ENCODE measurements at regions of chr6 and their contacts with region 1.

Region 1: DNA sequence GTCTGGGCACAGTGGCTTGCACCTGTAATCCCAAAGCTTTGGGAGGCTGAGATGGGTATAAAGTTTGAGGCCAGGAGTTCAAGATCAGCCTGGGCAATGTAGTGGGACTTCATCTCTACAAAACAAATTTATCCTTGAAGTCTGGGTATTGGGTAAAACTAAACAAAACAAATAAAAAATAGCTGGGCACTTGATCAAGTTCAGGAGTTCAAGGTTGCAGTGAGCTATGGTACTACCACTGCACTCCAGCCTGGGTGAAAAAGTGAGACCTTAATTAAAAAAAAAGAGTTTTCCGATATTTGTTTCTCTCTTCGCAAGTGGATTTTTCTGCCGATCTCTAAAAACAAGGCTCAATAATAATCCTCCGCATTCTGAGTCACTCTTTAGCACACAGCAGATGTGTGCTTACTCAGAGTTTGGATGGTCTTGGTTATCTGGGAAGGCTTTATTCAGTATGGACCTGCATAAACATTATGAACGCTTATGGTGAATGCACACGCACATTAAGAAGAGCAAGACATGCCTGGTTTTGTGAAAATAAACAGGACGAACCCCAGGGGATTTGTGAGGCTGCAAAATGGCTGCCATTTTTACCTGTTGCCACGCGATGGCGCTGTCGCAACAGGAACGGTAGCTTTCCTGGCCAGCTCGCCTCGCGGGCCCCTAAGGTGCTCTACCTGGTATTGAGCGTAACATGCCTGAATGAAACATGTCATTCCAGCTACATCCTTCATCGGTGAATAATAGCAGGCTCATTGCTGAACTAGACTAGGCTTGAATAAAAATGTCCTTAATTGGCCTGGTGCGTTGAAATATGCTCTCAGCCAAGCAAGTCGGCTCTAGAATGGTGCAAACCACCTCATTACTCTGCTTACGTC is 6.0 kb downstream of the OPN5 start:
- DNase-seq: peak; percentile 21 to 87
- H3K4me3 ChIP-seq: no peak overlapping the region
- CTCF ChIP-seq: peak in 1 of 3 donors; percentile 38
- POLR2A ChIP-seq: no peak

Region 2: DNA sequence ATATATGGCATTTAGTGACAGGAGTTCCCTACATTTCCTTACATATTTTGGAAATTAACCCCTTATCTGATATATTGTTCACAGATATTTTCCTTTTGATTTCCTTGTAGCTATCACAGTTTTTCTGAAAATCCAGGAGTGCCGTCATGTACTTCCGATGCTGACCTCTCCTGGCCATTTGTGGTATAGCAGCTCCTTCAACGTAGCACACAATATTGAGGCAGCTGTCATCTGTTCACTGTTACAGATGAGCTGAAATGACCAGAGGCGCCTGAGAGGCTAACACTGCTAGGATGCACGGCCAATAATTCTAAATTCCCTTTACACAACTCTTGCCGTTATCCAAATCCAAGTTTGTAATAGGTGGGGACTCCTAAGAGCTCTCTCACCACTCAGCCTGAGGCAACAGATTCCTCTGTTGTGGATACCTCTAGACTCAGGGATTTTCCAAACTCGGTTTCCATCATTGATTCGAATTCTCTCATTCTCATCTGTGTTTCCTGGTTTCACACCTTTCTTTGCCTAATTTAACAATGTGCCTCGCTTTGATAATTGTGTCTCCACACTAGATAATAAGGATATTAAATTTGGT is 1622.2 kb after region 1 on chr6:
- intact Hi-C with region 1: loop called (anchors 10 kb)
- DNase-seq: peak; percentile 58 to 90
- H3K4me3 ChIP-seq: no peak overlapping the region
- CTCF ChIP-seq: peak in 1 of 3 donors; percentile 21
- POLR2A ChIP-seq: no peak

Measured in lower leg skin (tissue), 4 donors.